IMR-90 (cell line): ENCODE measurements at regions of chr14 and their contacts with region 1.

Region 1: DNA sequence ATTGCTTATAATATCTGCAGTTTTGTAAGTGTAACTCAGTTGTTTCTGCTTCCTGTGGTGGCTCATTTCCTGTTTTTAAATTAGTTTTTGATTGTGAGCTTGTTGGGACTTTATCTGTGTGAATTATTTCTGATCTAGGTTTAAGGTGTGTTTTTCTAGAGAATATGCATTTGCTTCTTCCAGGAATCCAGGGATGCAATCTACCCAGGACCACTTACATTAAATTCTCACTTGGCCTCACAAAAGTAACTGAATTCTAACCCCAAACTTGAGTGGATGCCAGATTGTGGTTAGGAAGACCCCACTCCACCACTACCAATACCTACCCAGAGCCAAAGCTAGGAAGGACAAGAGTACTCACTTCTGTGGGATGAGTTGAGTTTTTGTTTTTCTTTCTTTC is 11.9 kb downstream of the STYX start:
- DNase-seq: peak; percentile 0
- ATAC-seq: no peak; the same call in 1 of the 2 replicates
- H3K4me3 ChIP-seq: no peak overlapping the region
- H3K27ac ChIP-seq: no peak overlapping the region
- H3K4me1 ChIP-seq: peaks cover 5% of the 10 kb centered on the region
- H3K27me3 ChIP-seq: no peaks in the 10 kb centered on the region
- CTCF ChIP-seq: no peak
- POLR2A ChIP-seq: no peak
- RAD21 ChIP-seq: no peak

Region 2: GRCh38 chr14:53152890-53153701 is 411.2 kb after region 1 on chr14 and contains the start of gene DDHD1:
- CTCF ChIA-PET with region 1: no interaction called
- POLR2A ChIA-PET with region 1: no interaction called
- dilution Hi-C with region 1: no loop called
- in situ Hi-C with region 1: no loop called
- intact Hi-C with region 1: loop called (anchors 10 kb)
- DNase-seq: peak; percentile 65
- ATAC-seq: peak; percentile 88
- H3K4me3 ChIP-seq: peak within 1 kb of the TSS; percentile 95
- H3K27ac ChIP-seq: peak within 1 kb of the TSS; percentile 72
- H3K4me1 ChIP-seq: peaks cover 5% of the 10 kb centered on the region; the same call in 1 of the 2 replicates
- H3K27me3 ChIP-seq: no peaks in the 10 kb centered on the region
- CTCF ChIP-seq: no peak
- POLR2A ChIP-seq: 0 out of 2 replicates have a peak, but pooled peaks have one; percentile 22
- RAD21 ChIP-seq: no peak
- total RNA-seq, gene DDHD1: 9.0 and 14.2 TPM in 2 replicates